ENCODE measurements at regions of chr14 and their contacts with region 1.

Region 1: DNA sequence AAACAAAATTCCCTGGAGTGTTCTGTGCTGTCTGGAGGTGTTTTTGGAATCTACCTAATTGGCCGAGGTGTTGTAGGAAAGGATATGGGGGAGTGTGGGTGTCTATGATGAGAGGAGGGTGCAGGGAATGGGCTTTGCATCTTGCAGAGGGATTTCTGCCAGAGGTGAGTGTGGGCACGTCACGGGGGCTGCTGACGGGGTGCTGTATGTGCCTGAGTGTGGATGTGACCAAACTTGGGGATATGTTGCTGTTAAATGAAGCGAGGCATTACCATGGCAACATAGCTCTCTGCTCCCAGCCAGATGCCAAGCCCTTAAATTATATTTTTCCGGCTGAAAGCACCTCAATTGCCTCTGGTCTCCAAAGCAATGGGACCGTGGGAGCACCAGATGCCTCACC is 44.3 kb upstream of the SPTLC2 start:
- DNase-seq: no peak
- ATAC-seq: no peak
- H3K4me3 Mint-ChIP-seq: no peak overlapping the region
- H3K27ac Mint-ChIP-seq: no peak overlapping the region
- H3K4me1 Mint-ChIP-seq: peaks cover 3% of the 10 kb centered on the region
- H3K27me3 Mint-ChIP-seq: no peaks in the 10 kb centered on the region

Region 2: GRCh38 chr14:77529963-77530362 is 130.8 kb before region 1 on chr14:
- CTCF ChIA-PET with region 1: no interaction called
- POLR2A ChIA-PET with region 1: no interaction called
- intact Hi-C with region 1: no loop called
- DNase-seq: no peak
- ATAC-seq: no peak
- H3K4me3 Mint-ChIP-seq: no peak overlapping the region
- H3K27ac Mint-ChIP-seq: no peak overlapping the region
- H3K4me1 Mint-ChIP-seq: peaks cover 3% of the 10 kb centered on the region
- H3K27me3 Mint-ChIP-seq: no peaks in the 10 kb centered on the region

Region 3: DNA sequence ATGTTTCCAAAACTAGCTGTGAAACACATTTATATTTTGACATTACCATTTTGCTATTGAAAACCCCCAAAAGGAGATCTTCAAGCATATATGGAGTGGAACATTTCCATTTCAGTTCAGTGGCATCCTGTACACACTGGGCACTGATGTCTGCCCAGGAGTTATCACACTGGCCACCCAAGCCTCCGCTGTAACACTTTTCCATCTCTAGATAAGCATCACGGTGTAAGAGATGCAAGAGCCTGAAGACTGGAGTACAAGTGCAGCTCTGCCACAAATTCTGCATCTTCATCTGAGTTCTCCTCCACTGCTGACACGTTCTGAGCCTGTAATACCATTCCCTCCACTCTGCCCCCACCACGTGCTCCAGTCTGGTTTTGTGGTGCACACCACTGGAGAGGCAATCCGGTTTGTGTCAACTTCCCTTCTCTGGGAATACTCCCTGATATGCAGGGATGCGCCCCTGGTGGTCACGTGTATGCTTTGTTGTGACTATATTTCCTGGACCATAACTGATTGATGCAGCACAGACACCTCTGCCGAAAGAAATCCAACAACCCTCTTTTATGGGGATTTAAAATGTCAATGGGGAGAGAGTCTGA is 57.0 kb before region 1 on chr14:
- CTCF ChIA-PET with region 1: no interaction called
- POLR2A ChIA-PET with region 1: no interaction called
- intact Hi-C with region 1: no loop called
- DNase-seq: peak; percentile 26
- ATAC-seq: peak; percentile 11
- H3K4me3 Mint-ChIP-seq: no peak overlapping the region
- H3K27ac Mint-ChIP-seq: no peak overlapping the region
- H3K4me1 Mint-ChIP-seq: peaks cover 62% of the 10 kb centered on the region
- H3K27me3 Mint-ChIP-seq: no peaks in the 10 kb centered on the region

Region 4: GRCh38 chr14:77746064-77746702 is 85.4 kb after region 1 on chr14:
- CTCF ChIA-PET with region 1: no interaction called
- POLR2A ChIA-PET with region 1: no interaction called
- intact Hi-C with region 1: no loop called
- DNase-seq: no peak
- ATAC-seq: no peak
- H3K4me3 Mint-ChIP-seq: no peak overlapping the region
- H3K27ac Mint-ChIP-seq: no peak overlapping the region
- H3K4me1 Mint-ChIP-seq: peaks cover 28% of the 10 kb centered on the region
- H3K27me3 Mint-ChIP-seq: no peaks in the 10 kb centered on the region

Region 5: DNA sequence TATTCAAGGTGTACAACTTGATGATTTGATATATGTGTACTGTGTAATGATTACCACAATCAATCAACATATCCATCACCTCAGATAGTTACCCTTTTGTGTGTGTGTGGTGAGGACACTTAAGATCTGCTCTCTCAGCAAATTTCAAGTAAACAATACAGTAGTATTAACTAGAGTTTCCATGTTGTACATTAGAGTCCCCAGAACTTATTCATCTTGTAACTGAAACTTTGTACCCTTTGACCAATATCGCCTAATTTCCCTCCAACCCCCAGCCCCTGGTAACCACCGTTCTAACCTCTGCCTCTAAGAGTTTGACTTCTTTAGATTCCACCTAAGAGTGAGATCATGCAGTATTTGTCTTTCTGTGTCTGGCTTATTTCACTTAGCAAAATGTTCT is 151.3 kb after region 1 on chr14:
- CTCF ChIA-PET with region 1: no interaction called
- POLR2A ChIA-PET with region 1: no interaction called
- intact Hi-C with region 1: loop called (anchors 1 kb)
- DNase-seq: no peak
- ATAC-seq: no peak
- H3K4me3 Mint-ChIP-seq: no peak overlapping the region
- H3K27ac Mint-ChIP-seq: no peak overlapping the region
- H3K4me1 Mint-ChIP-seq: peaks cover 12% of the 10 kb centered on the region
- H3K27me3 Mint-ChIP-seq: no peaks in the 10 kb centered on the region

Measured in activated CD4-positive, alpha-beta T cell treated with anti-CD3 and anti-CD28 coated beads for 36 hours (primary cell).